ENCODE measurements at regions of chr15 and their contacts with region 1.

Region 1: GRCh38 chr15:84773716-84774115 is 25.3 kb downstream of the ZNF592 start:
- DNase-seq: no peak
- ATAC-seq: no peak
- H3K4me3 ChIP-seq: no peak overlapping the region
- H3K27ac ChIP-seq: peak overlapping the region in 1 of 12 donors; percentile 58
- H3K4me1 ChIP-seq: peaks cover 0 to 38% (median 16%) of the 10 kb centered on the region in 12 donors
- H3K27me3 ChIP-seq: no peaks in the 10 kb centered on the region
- CTCF ChIP-seq: no peak
- POLR2A ChIP-seq: no peak

Region 2: GRCh38 chr15:84588053-84588874 is 185.5 kb before region 1 on chr15:
- intact Hi-C with region 1: loop called in 1 of 10 experiments (anchors 10 kb)
- DNase-seq: peak; percentile 84 to 92 (median 87)
- ATAC-seq: peak; percentile 98 to 99 (median 99)
- H3K4me3 ChIP-seq: peak overlapping the region in 10 of 12 donors; percentile 25 to 58 (median 44)
- H3K27ac ChIP-seq: no peak overlapping the region
- H3K4me1 ChIP-seq: peaks cover 0 to 10% (median 3%) of the 10 kb centered on the region in 12 donors
- H3K27me3 ChIP-seq: no peaks in the 10 kb centered on the region
- CTCF ChIP-seq: peak; percentile 82 to 98 (median 90)
- POLR2A ChIP-seq: no peak

Region 3: GRCh38 chr15:84810073-84810840 is 36.5 kb after region 1 on chr15:
- intact Hi-C with region 1: loop called in 1 of 10 experiments (anchors 5 kb)
- DNase-seq: peak in 1 of 5 donors; percentile 19
- ATAC-seq: peak in 3 of 4 donors; percentile 47 to 62 (median 56)
- H3K4me3 ChIP-seq: no peak overlapping the region
- H3K27ac ChIP-seq: no peak overlapping the region
- H3K4me1 ChIP-seq: peaks cover 0 to 11% (median 5%) of the 10 kb centered on the region in 12 donors
- H3K27me3 ChIP-seq: no peaks in the 10 kb centered on the region
- CTCF ChIP-seq: no peak
- POLR2A ChIP-seq: no peak